ENCODE measurements at regions of chr9 and their contacts with region 1.

Region 1: GRCh38 chr9:94726495-94727191 is at the start of gene AOPEP:
- DNase-seq: peak; percentile 93 to 99 (median 98)

Region 2: DNA sequence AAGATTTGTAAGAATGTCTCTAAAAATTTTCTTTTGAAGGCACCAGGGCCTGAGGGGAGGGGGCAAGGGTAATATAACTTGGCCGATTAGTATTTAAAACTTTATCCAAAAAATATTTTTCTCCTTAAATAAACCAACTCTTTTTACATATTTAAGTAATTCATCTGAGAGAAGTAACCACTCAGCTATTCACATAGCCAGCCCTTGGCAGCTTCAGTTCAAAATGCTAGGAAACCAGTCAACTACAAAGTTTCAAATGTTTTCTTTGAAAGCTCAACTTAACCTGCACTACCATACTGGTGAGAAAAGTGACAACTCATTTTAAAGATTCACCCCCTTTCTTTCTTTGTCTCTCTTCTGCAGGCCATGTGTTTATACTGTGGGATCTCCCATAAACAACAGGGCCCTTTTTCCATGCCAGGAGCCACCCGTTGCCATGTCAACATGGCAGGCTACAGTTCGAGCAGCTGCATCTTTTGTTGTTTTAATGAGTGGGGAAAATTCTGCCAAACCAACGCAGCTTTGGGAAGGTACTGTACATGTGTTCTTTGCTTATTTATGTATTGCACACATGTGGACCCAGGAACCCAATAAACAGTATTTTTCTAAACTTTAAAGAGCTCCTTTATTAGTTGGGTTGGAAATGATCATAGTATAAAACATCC is 46.1 kb after region 1 on chr9:
- intact Hi-C with region 1: loop called (anchors 10 kb)
- DNase-seq: peak; percentile 38 to 90 (median 78)

Region 3: GRCh38 chr9:95147452-95148207 is 421.0 kb after region 1 on chr9:
- intact Hi-C with region 1: no loop called
- DNase-seq: no peak

Measured in head of caudate nucleus (tissue), 42 donors.